B cell (primary cell): ENCODE measurements at regions of chr6 and their contacts with region 1.

Region 1: GRCh38 chr6:122471107-122472021 is at the start of gene SERINC1:
- DNase-seq: peak; percentile 96
- ATAC-seq: peak; percentile 94
- H3K4me3 ChIP-seq: peak within 1 kb of the TSS; percentile 97 to 100 (median 99)
- H3K4me3 Mint-ChIP-seq: peak within 1 kb of the TSS; percentile 99
- H3K27ac ChIP-seq: peak within 1 kb of the TSS; percentile 97 to 99
- H3K27ac Mint-ChIP-seq: peak within 1 kb of the TSS; percentile 100
- H3K4me1 ChIP-seq: peaks cover 15 to 34% of the 10 kb centered on the region in 2 donors
- H3K4me1 Mint-ChIP-seq: peaks cover 40% of the 10 kb centered on the region
- H3K27me3 ChIP-seq: no peaks in the 10 kb centered on the region
- H3K27me3 Mint-ChIP-seq: no peaks in the 10 kb centered on the region
- CTCF ChIP-seq: no peak
- total RNA-seq, gene SERINC1: 92.0 and 92.1 TPM in 2 replicates

Region 2: DNA sequence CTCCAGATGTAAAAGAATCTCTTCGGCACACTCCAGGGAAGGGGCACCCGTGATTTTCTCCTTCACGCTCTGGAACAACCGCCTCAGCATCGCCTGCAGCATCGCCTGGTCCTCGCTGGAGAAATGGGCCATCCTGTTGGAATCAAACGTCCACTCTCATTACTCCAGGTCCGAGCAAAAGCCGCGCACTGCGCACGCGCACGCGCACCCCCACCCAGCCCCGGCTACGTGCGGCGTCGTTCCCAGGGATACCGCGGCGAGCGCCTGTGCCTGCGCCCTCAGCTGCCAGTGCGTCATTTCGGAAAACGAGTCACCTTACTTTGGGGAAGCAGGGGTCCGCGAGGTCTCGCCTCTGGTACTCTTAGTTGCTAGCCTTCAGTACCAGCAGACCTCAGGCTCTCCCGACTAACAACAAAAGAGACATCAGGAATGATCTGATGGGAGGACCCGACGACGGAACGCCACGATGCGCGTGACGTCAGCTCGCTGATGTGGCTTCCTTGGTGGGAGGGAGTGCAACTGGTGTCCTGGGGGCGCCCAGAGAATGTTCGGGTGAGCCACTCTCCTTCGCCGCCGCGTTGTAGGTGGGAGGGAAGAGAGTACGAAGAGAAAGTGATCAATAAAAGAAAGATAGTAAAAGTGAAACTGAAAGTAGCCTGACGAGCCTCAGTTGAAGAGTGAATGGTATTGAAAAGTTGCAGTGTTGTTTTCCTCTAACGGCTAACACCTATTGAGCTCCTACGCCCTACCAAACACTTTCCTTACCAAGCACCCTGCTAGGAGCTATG is 1136.9 kb before region 1 on chr6 and contains the start of gene TBC1D32:
- CTCF ChIA-PET with region 1: no interaction called
- POLR2A ChIA-PET with region 1: no interaction called
- intact Hi-C with region 1: loop called (anchors 5 kb)
- DNase-seq: peak; percentile 93
- ATAC-seq: peak; percentile 90
- H3K4me3 ChIP-seq: peak within 1 kb of the TSS; percentile 51 to 96 (median 81)
- H3K4me3 Mint-ChIP-seq: peak within 1 kb of the TSS; percentile 98
- H3K27ac ChIP-seq: peak within 1 kb of the TSS; percentile 91 to 96
- H3K27ac Mint-ChIP-seq: peak within 1 kb of the TSS; percentile 98
- H3K4me1 ChIP-seq: peaks cover 8 to 13% of the 10 kb centered on the region in 2 donors
- H3K4me1 Mint-ChIP-seq: peaks cover 30% of the 10 kb centered on the region
- H3K27me3 ChIP-seq: peaks cover 0 to under 1% (median 0%) of the 10 kb centered on the region in 4 experiments
- H3K27me3 Mint-ChIP-seq: no peaks in the 10 kb centered on the region
- CTCF ChIP-seq: no peak
- total RNA-seq, gene TBC1D32: 20.9 and 23.8 TPM in 2 replicates

Region 3: GRCh38 chr6:122431780-122432179 is 39.6 kb before region 1 on chr6:
- CTCF ChIA-PET with region 1: no interaction called
- POLR2A ChIA-PET with region 1: no interaction called
- intact Hi-C with region 1: no loop called
- DNase-seq: no peak
- ATAC-seq: no peak
- H3K4me3 ChIP-seq: no peak overlapping the region
- H3K4me3 Mint-ChIP-seq: no peak overlapping the region
- H3K27ac ChIP-seq: no peak overlapping the region
- H3K27ac Mint-ChIP-seq: no peak overlapping the region
- H3K4me1 ChIP-seq: no peaks in the 10 kb centered on the region
- H3K4me1 Mint-ChIP-seq: no peaks in the 10 kb centered on the region
- H3K27me3 ChIP-seq: no peaks in the 10 kb centered on the region
- H3K27me3 Mint-ChIP-seq: no peaks in the 10 kb centered on the region
- CTCF ChIP-seq: no peak

Region 4: DNA sequence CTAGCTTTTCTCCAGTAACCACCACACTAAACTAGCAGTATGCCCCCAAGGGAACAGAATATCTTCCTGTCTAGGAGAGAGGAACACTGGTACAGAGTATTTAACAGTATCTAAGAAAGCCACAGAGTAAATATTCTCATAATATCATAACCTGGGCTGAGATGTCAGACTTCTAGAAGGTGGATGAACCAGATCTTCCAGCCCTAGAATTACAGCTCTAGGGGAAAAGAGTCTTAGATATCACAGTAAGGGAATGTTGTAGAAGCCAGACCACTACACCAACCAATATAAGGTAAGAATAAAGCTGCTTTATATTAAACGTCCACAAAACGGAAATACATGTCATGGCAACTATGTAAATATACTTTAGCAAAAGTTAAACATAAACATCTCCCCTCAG is 12.2 kb before region 1 on chr6:
- CTCF ChIA-PET with region 1: no interaction called
- POLR2A ChIA-PET with region 1: no interaction called
- intact Hi-C with region 1: loop called (anchors 2 kb)
- DNase-seq: no peak
- ATAC-seq: no peak
- H3K4me3 ChIP-seq: no peak overlapping the region
- H3K4me3 Mint-ChIP-seq: no peak overlapping the region
- H3K27ac ChIP-seq: no peak overlapping the region
- H3K27ac Mint-ChIP-seq: no peak overlapping the region
- H3K4me1 ChIP-seq: peaks cover 7 to 32% of the 10 kb centered on the region in 2 donors
- H3K4me1 Mint-ChIP-seq: peaks cover 52% of the 10 kb centered on the region
- H3K27me3 ChIP-seq: no peaks in the 10 kb centered on the region
- H3K27me3 Mint-ChIP-seq: no peaks in the 10 kb centered on the region
- CTCF ChIP-seq: no peak

Region 5: GRCh38 chr6:122530440-122531046 is 59.2 kb after region 1 on chr6:
- CTCF ChIA-PET with region 1: interaction called, 21 read pairs
- POLR2A ChIA-PET with region 1: no interaction called
- intact Hi-C with region 1: loop called (anchors 1 kb)
- DNase-seq: peak; percentile 73
- ATAC-seq: peak; percentile 88
- H3K4me3 ChIP-seq: no peak overlapping the region
- H3K4me3 Mint-ChIP-seq: no peak overlapping the region
- H3K27ac ChIP-seq: no peak overlapping the region
- H3K27ac Mint-ChIP-seq: no peak overlapping the region
- H3K4me1 ChIP-seq: no peaks in the 10 kb centered on the region
- H3K4me1 Mint-ChIP-seq: no peaks in the 10 kb centered on the region
- H3K27me3 ChIP-seq: peaks cover 0 to 12% (median 2%) of the 10 kb centered on the region in 4 experiments
- H3K27me3 Mint-ChIP-seq: peaks cover 26% of the 10 kb centered on the region
- CTCF ChIP-seq: peak; percentile 91

Region 6: GRCh38 chr6:123316733-123317323 is 845.5 kb after region 1 on chr6:
- CTCF ChIA-PET with region 1: no interaction called
- POLR2A ChIA-PET with region 1: no interaction called
- intact Hi-C with region 1: loop called (anchors 5 kb)
- DNase-seq: peak; percentile 3
- ATAC-seq: no peak
- H3K4me3 ChIP-seq: no peak overlapping the region
- H3K4me3 Mint-ChIP-seq: no peak overlapping the region
- H3K27ac ChIP-seq: no peak overlapping the region
- H3K27ac Mint-ChIP-seq: no peak overlapping the region
- H3K4me1 ChIP-seq: no peaks in the 10 kb centered on the region
- H3K4me1 Mint-ChIP-seq: no peaks in the 10 kb centered on the region
- H3K27me3 ChIP-seq: no peaks in the 10 kb centered on the region
- H3K27me3 Mint-ChIP-seq: no peaks in the 10 kb centered on the region
- CTCF ChIP-seq: peak; percentile 83